ENCODE measurements at regions of chr1 and their contacts with region 1.

Region 1: DNA sequence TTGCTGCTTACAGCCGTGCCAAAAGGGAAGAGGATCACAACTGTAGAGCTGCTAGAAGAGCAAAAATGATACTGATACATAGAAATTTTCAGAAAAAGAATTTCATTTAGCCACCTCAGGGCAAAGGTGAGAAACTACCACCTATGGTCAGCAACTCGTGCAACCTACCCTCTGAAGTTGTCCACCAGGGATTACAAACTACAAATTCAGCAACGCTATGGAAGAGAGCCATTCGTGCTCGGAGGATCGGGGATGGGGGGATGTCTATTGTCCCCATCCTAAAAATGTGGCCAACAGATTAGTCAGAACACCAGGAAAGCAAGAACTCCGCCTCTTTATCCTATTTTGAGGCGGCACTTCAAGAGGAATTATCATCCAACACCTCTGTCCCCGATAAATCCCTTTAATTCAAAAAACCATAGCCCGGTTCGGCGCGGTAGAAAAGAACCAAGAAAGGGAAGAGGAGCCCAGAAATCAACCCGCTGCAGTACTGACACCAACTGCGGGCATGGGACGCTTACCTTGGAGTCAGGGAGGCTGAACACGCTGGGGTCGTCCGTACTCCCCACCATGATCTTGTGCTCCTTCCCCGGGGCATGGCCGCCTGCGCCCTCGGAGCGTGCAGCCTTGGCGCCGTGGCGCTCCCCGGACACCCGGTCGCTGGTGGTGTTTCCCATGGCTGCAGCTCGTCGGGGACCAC is 652 bp downstream of the PRKAB2 start:
- DNase-seq: peak; percentile 29
- ATAC-seq: no peak; the same call in 1 of the 2 replicates
- H3K4me3 ChIP-seq: peak overlapping the region; percentile 86
- H3K27ac ChIP-seq: peak overlapping the region; percentile 39
- H3K4me1 ChIP-seq: peaks cover 56% of the 10 kb centered on the region
- H3K27me3 ChIP-seq: no peaks in the 10 kb centered on the region
- CTCF ChIP-seq: no peak

Region 2: DNA sequence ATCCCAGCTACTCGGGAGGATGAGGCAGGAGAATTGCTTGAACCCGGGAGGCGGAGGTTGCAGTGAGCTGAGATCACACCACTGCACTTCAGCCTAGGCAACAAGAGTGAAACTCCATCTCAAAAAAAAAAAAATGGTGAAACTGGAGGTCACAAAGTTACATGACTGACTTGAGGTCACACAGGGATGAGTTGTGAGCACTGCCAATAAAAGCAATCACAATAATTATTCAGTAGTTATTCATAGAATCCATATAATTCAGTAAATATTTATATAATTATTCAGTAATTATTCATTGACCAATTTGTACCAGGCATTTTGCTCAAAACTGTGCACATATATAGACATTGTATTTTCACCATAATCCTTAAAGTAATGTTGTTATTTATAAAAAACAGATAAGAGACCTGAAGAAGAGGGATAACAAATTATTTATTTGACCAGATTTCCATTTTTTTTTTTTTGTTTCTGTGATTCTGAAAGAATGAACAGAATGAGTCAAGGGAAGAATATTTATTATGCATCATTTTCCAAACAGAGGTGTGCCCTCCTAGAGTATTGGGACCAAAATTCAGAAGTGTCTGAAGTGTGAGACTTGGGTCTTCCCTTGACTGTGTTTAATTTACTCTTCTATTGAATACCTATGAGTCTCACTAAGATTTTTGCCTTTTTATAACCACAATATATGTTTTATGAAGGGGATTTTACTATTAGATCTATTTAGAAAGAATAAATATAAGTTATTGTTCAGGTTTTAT is 42.3 kb before region 1 on chr1:
- CTCF ChIA-PET with region 1: no interaction called
- POLR2A ChIA-PET with region 1: no interaction called
- intact Hi-C with region 1: loop called (anchors 2 kb)
- DNase-seq: peak; percentile 95
- ATAC-seq: peak; percentile 96
- H3K4me3 ChIP-seq: peak overlapping the region; percentile 23; the same call in 1 of the 2 replicates
- H3K27ac ChIP-seq: peak overlapping the region; percentile 92
- H3K4me1 ChIP-seq: peaks cover 30% of the 10 kb centered on the region
- H3K27me3 ChIP-seq: no peaks in the 10 kb centered on the region
- CTCF ChIP-seq: no peak

Region 3: GRCh38 chr1:147242439-147243227 is 71.0 kb after region 1 on chr1 and contains the start of gene CHD1L:
- CTCF ChIA-PET with region 1: interaction called, 8 read pairs
- POLR2A ChIA-PET with region 1: interaction called, 6 read pairs
- intact Hi-C with region 1: loop called (anchors 1 kb)
- DNase-seq: peak; percentile 99
- ATAC-seq: peak; percentile 83
- H3K4me3 ChIP-seq: peak within 1 kb of the TSS; percentile 86
- H3K27ac ChIP-seq: peak within 1 kb of the TSS; percentile 82
- H3K4me1 ChIP-seq: peaks cover 43% of the 10 kb centered on the region
- H3K27me3 ChIP-seq: no peaks in the 10 kb centered on the region
- CTCF ChIP-seq: peak; percentile 90
- total RNA-seq, gene CHD1L: 63.9 and 69.8 TPM in 2 replicates

Region 4: DNA sequence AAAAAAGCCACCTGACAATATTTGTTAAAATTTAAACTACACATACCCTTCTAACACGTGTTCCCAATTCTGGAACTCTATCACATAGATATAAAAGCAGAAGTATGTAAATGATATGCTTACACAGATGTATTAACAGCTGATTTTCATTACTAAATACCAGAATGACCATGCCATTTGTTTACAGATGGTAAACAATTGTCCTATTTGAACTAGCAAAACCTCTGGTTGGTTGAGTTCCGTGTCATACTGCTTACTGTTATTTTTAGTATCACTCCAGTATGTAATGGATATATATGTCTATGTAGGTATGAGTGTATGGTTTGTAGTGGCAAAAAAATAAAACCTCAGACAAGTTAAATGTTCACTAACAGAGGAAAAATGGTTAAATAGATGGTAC is 141.6 kb after region 1 on chr1:
- CTCF ChIA-PET with region 1: no interaction called
- POLR2A ChIA-PET with region 1: no interaction called
- intact Hi-C with region 1: no loop called
- DNase-seq: no peak
- ATAC-seq: peak; percentile 35
- H3K4me3 ChIP-seq: no peak overlapping the region
- H3K27ac ChIP-seq: no peak overlapping the region
- H3K4me1 ChIP-seq: no peaks in the 10 kb centered on the region
- H3K27me3 ChIP-seq: no peaks in the 10 kb centered on the region
- CTCF ChIP-seq: no peak

Measured in PC-3 (cell line).